ENCODE measurements at regions of chr19 and their contacts with region 1.

Region 1: DNA sequence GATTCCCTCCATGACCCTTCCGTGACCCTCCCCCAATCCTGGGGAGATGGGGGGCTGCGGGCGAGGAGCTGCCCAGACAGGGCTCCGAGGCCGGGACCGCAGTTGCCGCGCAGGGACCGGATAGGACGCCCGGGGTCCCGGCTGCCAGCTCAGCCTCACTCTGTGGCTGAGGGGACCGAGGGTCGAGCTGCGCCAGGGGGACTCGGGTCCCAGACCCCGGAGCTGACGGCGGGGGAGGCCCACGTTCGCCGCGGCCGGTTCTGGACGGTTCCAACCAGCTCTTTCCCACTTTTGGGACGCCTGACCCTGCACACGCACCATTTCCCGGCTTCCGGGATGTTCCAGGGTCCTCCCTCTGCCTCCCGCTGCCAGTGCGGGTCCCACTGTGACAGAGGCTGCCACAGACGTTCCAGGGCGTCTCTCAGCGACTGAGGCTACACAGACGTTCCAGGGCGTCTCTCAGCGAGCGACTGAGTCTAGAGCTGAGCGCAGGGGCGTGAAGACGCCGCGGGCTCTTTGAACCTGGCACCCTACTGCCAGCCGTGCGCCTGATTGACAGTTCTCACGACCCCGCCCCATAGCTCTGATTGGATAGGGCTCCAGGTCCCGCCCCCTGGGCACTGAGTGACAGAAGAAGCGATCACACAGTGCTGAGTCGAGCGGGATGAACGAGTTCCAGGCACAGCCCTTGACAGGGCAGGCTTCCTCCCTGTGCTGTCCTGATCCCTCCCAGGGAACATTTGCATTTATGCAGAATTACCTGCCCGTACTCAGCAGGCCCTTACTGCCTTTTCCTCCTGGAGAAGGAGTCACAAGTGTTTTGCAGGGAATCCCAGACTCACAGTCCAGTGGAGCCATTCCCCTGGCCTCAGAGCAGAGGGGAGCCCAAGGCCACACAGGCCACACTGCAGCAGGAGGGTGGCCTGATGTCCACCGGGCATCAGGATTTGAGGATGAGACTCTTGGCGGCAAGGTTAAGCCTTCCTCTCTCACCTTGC is at the start of gene ZNF563:
- DNase-seq: peak; percentile 99
- H3K4me3 ChIP-seq: peak within 1 kb of the TSS; percentile 53 to 84 (median 74)
- H3K27ac ChIP-seq: peak within 1 kb of the TSS; percentile 91 to 96 (median 94)
- H3K4me1 ChIP-seq: peaks cover 5 to 38% (median 10%) of the 10 kb centered on the region in 4 donors
- H3K27me3 ChIP-seq: no peaks in the 10 kb centered on the region
- CTCF ChIP-seq: no peak
- EP300 ChIP-seq: no peak
- POLR2A ChIP-seq: peak; percentile 91
- total RNA-seq, gene ZNF563: 1.2 to 6.5 (median 3.4) TPM

Region 2: DNA sequence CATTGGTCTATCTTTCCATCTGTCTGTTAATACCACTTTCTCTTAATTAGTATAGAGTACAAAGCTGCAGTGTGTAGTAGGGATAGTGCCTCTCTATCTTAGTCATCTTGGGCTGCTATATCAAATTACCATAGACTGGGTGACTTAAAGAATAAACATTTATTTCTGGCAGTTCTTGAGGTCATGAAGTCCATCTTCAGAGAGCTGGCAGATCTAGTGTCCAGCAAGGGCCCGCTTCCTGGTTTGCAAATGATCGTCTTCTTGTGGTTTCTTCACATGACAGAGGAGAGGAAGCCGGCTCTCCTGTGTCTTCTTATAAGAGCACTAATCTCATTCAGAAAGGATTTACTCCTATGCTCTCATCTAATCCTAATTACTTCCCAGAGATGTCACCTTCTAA is 402.4 kb before region 1 on chr19:
- in situ Hi-C with region 1: no loop called
- intact Hi-C with region 1: no loop called
- DNase-seq: peak; percentile 9
- H3K4me3 ChIP-seq: no peak overlapping the region
- H3K27ac ChIP-seq: no peak overlapping the region
- H3K4me1 ChIP-seq: peaks cover 8 to 14% (median 10%) of the 10 kb centered on the region in 4 donors
- H3K27me3 ChIP-seq: no peaks in the 10 kb centered on the region
- CTCF ChIP-seq: no peak
- EP300 ChIP-seq: no peak
- POLR2A ChIP-seq: no peak

Region 3: GRCh38 chr19:12194827-12195731 is 138.4 kb before region 1 on chr19:
- in situ Hi-C with region 1: no loop called
- intact Hi-C with region 1: loop called (anchors 10 kb)
- DNase-seq: peak; percentile 79
- H3K4me3 ChIP-seq: peak overlapping the region; percentile 8 to 82 (median 49)
- H3K27ac ChIP-seq: peak overlapping the region; percentile 75 to 84 (median 78)
- H3K4me1 ChIP-seq: peaks cover 0 to 11% (median 0%) of the 10 kb centered on the region in 4 donors
- H3K27me3 ChIP-seq: no peaks in the 10 kb centered on the region
- CTCF ChIP-seq: no peak
- EP300 ChIP-seq: no peak
- POLR2A ChIP-seq: peak; percentile 29

Measured in transverse colon (tissue), 4 donors.